ENCODE measurements at regions of chr14 and their contacts with region 1.

Region 1: GRCh38 chr14:75982266-75983018 is 647 bp upstream of the TGFB3 start:
- DNase-seq: peak; percentile 78 to 83
- H3K4me3 ChIP-seq: peak overlapping the region; percentile 49 to 78 (median 72)
- H3K27ac ChIP-seq: peak overlapping the region; percentile 98 to 99 (median 99)
- H3K4me1 ChIP-seq: peaks cover 26 to 32% of the 10 kb centered on the region in 2 donors
- H3K27me3 ChIP-seq: no peaks in the 10 kb centered on the region
- CTCF ChIP-seq: peak; percentile 29 to 75 (median 48)
- POLR2A ChIP-seq: no peak

Region 2: GRCh38 chr14:75711104-75711795 is 271.2 kb before region 1 on chr14:
- intact Hi-C with region 1: loop called (anchors 5 kb)
- DNase-seq: peak; percentile 29 to 51
- H3K4me3 ChIP-seq: no peak overlapping the region
- H3K27ac ChIP-seq: peak overlapping the region; percentile 74 to 82 (median 79)
- H3K4me1 ChIP-seq: peaks cover 16 to 23% of the 10 kb centered on the region in 2 donors
- H3K27me3 ChIP-seq: no peaks in the 10 kb centered on the region
- CTCF ChIP-seq: peak; percentile 35 to 85 (median 62)
- POLR2A ChIP-seq: no peak

Region 3: DNA sequence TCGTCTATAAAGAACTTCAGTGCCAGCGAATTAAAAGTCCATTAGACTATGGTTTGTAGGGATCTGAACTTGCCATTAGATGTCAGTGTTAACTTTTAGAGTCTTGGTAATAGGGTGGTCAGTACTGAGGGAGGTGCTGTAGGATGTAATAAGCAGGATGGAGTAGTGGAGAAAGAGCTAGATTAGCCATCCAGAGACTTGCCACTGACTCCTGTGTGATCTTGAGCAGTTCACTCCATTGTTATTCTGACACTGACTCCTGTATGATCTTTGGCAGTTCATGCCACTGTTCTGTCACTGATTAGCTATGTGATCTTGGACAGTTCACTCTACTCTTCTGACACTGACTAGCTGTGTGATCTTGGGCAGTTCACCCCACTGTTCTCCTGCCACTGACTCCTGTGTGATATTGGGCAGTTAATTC is 187.8 kb before region 1 on chr14:
- intact Hi-C with region 1: loop called (anchors 5 kb)
- DNase-seq: no peak
- H3K4me3 ChIP-seq: no peak overlapping the region
- H3K27ac ChIP-seq: no peak overlapping the region
- H3K4me1 ChIP-seq: no peaks in the 10 kb centered on the region
- H3K27me3 ChIP-seq: no peaks in the 10 kb centered on the region
- CTCF ChIP-seq: peak in 2 of 6 experiments; percentile 12 to 26
- POLR2A ChIP-seq: no peak

Region 4: GRCh38 chr14:75906676-75907280 is 75.7 kb before region 1 on chr14:
- intact Hi-C with region 1: loop called (anchors 5 kb)
- DNase-seq: peak; percentile 43 to 64
- H3K4me3 ChIP-seq: no peak overlapping the region
- H3K27ac ChIP-seq: no peak overlapping the region
- H3K4me1 ChIP-seq: no peaks in the 10 kb centered on the region
- H3K27me3 ChIP-seq: no peaks in the 10 kb centered on the region
- CTCF ChIP-seq: peak; percentile 66 to 96 (median 78)
- POLR2A ChIP-seq: no peak

Measured in thyroid gland (tissue), 4 donors.